ENCODE measurements at regions of chr20 and their contacts with region 1.

Region 1: GRCh38 chr20:3753098-3753980 is 14.2 kb downstream of the ADISSP start:
- DNase-seq: peak; percentile 72
- ATAC-seq: peak; percentile 59
- H3K4me3 ChIP-seq: no peak overlapping the region
- H3K4me3 Mint-ChIP-seq: peak overlapping the region; percentile 37
- H3K27ac ChIP-seq: no peak overlapping the region
- H3K27ac Mint-ChIP-seq: peak overlapping the region; percentile 67
- H3K4me1 ChIP-seq: peaks cover 0 to 12% of the 10 kb centered on the region in 2 donors
- H3K4me1 Mint-ChIP-seq: peaks cover 7% of the 10 kb centered on the region
- H3K27me3 ChIP-seq: no peaks in the 10 kb centered on the region
- H3K27me3 Mint-ChIP-seq: no peaks in the 10 kb centered on the region
- CTCF ChIP-seq: peak; percentile 75

Region 2: DNA sequence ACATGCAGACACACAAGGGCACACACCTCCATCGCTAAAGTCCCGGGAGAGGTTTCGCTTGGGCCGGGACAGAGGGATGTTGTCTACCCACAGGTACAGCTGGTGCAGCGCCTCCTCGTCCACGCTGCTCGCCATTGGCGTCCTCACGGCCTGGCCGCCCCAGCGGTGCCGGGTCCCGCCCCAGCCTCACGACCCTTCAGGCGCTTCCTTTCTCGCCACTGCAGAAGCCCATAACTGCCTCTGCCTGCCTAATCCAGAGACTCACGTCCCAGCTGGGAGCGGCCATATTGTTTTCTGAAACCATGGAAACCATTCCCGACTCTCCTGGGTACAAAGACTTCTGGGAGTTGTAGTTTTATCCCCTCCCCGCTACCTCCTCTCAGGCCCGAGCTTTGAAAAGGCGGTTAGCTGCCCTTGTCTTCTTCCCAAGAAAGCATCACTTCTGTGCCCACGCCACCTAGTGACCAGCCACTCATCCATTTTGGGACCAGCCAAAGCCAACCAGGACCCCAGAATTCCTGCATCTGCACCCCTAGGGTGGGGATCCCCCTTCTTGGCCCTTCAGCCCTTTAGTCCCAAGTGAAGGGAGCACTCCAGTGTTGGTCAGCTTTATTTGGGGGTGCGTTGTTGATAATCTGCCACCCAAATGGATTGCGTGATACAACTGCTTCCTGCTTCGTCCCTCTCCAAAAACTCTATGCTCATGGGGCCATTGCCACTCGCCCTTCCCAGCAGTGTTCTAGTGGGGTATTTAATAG is 28.0 kb after region 1 on chr20 and contains the start of gene SPEF1:
- CTCF ChIA-PET with region 1: interaction called, 3 read pairs
- POLR2A ChIA-PET with region 1: no interaction called
- intact Hi-C with region 1: loop called (anchors 1 kb)
- DNase-seq: peak; percentile 78
- ATAC-seq: peak; percentile 64
- H3K4me3 ChIP-seq: peak within 1 kb of the TSS in 3 of 5 experiments; percentile 36 to 49 (median 38)
- H3K4me3 Mint-ChIP-seq: peak within 1 kb of the TSS; percentile 79
- H3K27ac ChIP-seq: no peak within 1 kb of the TSS
- H3K27ac Mint-ChIP-seq: peak within 1 kb of the TSS; percentile 32
- H3K4me1 ChIP-seq: peaks cover 29 to 45% of the 10 kb centered on the region in 2 donors
- H3K4me1 Mint-ChIP-seq: peaks cover 52% of the 10 kb centered on the region
- H3K27me3 ChIP-seq: peaks cover 0 to 15% (median 4%) of the 10 kb centered on the region in 4 experiments
- H3K27me3 Mint-ChIP-seq: no peaks in the 10 kb centered on the region
- CTCF ChIP-seq: no peak
- total RNA-seq, gene SPEF1: not detected in 2 replicates

Region 3: DNA sequence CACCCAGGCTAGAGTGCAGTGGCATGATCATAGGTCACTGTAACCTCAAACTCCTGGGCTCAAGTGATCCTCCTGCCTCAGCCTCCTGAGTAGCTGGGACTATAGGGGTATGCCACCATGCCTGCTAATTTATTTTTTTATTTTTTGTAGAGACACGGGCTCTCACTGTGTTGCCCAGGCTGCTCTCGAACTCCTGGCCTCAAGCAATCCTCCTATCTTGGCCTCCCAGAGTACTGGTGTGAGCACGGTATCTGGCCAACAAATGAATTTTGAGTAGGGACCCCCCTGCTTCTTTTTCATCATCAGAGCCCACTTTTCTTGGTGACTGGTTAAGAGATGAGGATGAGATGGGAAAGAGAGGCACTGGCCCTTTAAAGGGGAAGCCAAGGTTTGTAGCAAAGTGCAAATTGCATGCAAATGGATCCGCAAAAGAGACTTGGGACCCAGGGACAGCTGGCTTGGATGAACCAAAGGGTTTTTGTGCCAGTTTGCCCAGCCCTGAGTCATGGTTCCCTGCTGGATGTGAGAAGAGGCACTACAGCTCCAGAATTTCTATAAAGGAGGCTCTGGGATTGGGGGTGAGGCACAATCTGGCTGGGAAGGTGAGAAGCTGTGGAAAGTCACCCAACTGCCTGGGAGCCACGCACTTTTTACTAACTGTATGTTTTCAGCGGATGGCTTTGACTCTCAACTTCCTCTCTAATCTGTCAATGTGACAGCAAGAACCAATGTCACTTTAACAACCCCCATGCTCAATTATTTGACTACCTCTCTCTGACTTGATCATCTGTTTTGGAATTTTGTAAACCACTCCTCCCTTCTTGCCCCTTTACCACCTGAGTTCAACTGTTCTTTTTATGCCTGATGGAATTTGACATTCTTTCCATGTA is 320.8 kb after region 1 on chr20:
- CTCF ChIA-PET with region 1: interaction called, 3 read pairs
- POLR2A ChIA-PET with region 1: no interaction called
- intact Hi-C with region 1: loop called (anchors 5 kb)
- DNase-seq: no peak
- ATAC-seq: no peak
- H3K4me3 ChIP-seq: no peak overlapping the region
- H3K4me3 Mint-ChIP-seq: no peak overlapping the region
- H3K27ac ChIP-seq: no peak overlapping the region
- H3K27ac Mint-ChIP-seq: no peak overlapping the region
- H3K4me1 ChIP-seq: no peaks in the 10 kb centered on the region
- H3K4me1 Mint-ChIP-seq: no peaks in the 10 kb centered on the region
- H3K27me3 ChIP-seq: no peaks in the 10 kb centered on the region
- H3K27me3 Mint-ChIP-seq: peaks cover 13% of the 10 kb centered on the region
- CTCF ChIP-seq: no peak

Measured in B cell (primary cell).